AG04449 (cell line): ENCODE measurements at regions of chr12 and their contacts with region 1.

Region 1: DNA sequence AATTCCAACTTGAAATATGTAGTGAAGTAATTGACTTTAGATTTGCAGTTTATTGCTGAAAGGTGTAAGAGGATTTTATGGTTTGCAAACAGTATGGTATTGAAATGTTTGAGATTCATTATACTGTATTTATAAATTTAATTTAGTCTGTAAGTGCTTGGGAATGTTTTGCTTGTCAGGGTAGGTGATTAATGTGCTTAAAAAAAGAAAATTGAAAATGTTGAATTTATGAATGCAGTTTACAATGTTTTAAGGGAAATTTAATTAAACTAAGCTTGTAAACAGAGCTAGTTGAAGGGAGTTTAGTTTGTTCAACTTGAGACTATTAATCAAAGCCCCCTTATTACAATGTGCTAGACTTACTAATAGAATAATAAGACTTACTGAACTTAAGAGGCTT is 18.0 kb upstream of the CRY1 start:
- DNase-seq: no peak
- H3K4me3 ChIP-seq: no peak overlapping the region
- CTCF ChIP-seq: no peak

Region 2: DNA sequence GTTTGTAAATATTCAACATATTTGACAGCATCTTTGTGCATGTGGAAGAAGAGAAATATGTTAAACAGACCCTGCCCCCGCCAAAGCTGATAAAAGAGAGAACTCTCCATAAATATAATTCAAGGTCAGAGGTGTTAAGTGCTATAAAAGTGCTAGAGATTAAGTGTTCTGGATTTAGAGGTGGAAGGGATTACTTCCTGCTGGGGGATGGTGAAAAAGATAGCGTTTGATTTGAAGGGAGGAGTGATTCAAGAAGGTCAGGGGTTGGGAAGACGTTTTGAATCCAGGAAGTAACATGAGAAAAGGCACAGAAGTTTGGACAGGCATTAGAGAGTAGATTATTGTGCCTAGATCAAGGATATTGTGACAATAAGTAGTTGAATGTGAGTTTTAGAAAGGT is 306.6 kb before region 1 on chr12:
- CTCF ChIA-PET with region 1: no interaction called
- POLR2A ChIA-PET with region 1: no interaction called
- DNase-seq: no peak
- H3K4me3 ChIP-seq: no peak overlapping the region
- CTCF ChIP-seq: no peak

Region 3: GRCh38 chr12:107126796-107127481 is 15.6 kb after region 1 on chr12:
- CTCF ChIA-PET with region 1: interaction called, 81 read pairs
- POLR2A ChIA-PET with region 1: no interaction called
- DNase-seq: no peak
- H3K4me3 ChIP-seq: no peak overlapping the region
- CTCF ChIP-seq: peak; percentile 44

Region 4: GRCh38 chr12:107200394-107200793 is 89.1 kb after region 1 on chr12:
- CTCF ChIA-PET with region 1: no interaction called
- POLR2A ChIA-PET with region 1: no interaction called
- DNase-seq: no peak
- H3K4me3 ChIP-seq: no peak overlapping the region
- CTCF ChIP-seq: no peak